ENCODE measurements at regions of chr10 and their contacts with region 1.

Region 1: GRCh38 chr10:119199231-119199992 is 8.0 kb upstream of the GRK5 start:
- DNase-seq: peak; percentile 39
- H3K4me3 Mint-ChIP-seq: no peak overlapping the region
- H3K27ac Mint-ChIP-seq: no peak overlapping the region
- H3K4me1 Mint-ChIP-seq: peaks cover 31% of the 10 kb centered on the region
- H3K27me3 Mint-ChIP-seq: no peaks in the 10 kb centered on the region

Region 2: GRCh38 chr10:119416855-119417254 is 217.4 kb after region 1 on chr10:
- intact Hi-C with region 1: loop called (anchors 1 kb)
- DNase-seq: peak; percentile 54
- H3K4me3 Mint-ChIP-seq: no peak overlapping the region
- H3K27ac Mint-ChIP-seq: no peak overlapping the region
- H3K4me1 Mint-ChIP-seq: no peaks in the 10 kb centered on the region
- H3K27me3 Mint-ChIP-seq: no peaks in the 10 kb centered on the region

Region 3: GRCh38 chr10:119445311-119445934 is 246.0 kb after region 1 on chr10:
- intact Hi-C with region 1: loop called (anchors 2 kb)
- DNase-seq: peak; percentile 69
- H3K4me3 Mint-ChIP-seq: no peak overlapping the region
- H3K27ac Mint-ChIP-seq: no peak overlapping the region
- H3K4me1 Mint-ChIP-seq: peaks cover 2% of the 10 kb centered on the region
- H3K27me3 Mint-ChIP-seq: no peaks in the 10 kb centered on the region

Measured in activated T-helper 2 cell treated with anti-CD3 and anti-CD28 coated beads, Interferon-gamma antibody, Interleukin-2, Interleukin-4, amounts not matched to agents 10 μg/mL and 5 μg/mL and 100 μg/mL, durations not matched to agents 14 hours and 24 hours and 36 hours (primary cell).